Cardiac septum (tissue), 1 donor: ENCODE measurements at regions of chr17 and their contacts with region 1.

Region 1: DNA sequence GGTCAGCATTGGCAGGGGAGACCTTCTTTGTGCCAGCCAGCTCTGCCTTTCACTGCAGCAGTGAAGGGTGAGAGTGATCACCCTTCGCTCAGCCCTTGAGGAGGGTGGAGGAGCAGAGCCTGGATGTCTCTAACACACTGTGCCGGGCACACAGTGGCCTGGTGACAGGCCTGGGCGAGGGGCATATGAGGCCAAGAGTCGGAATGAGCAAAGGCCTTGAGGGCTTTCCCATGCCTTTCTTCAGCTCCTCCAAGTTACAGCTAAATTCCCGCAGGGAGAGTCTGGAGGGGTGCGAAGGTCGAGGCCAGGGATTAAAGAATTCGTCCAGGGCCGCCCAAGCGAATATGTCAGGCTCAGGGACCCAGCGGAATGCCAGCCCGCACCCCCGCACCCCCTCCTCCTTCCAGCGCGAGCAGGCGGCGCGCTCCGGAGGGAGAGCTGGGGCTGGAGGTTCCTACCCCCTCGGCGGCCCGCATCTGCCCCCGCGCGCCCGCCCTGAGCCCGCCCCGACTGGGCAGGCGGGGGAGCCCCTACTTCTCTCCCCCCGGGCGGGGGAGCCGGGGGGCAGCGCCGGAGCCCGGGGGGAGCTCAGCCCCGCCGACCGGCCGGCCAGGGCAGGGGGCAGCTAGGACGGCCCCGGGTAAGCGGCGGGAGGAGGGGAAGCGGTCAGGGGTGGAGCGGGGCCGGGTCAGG is at the start of gene RASL10B:
- DNase-seq: peak; percentile 78
- total RNA-seq, gene RASL10B: 22.0 TPM

Region 2: GRCh38 chr17:35695613-35696012 is 35.8 kb before region 1 on chr17:
- intact Hi-C with region 1: loop called (anchors 5 kb)
- DNase-seq: no peak

Region 3: GRCh38 chr17:36066365-36066985 is 335.1 kb after region 1 on chr17:
- intact Hi-C with region 1: no loop called
- DNase-seq: no peak